ENCODE measurements at regions of chr5 and their contacts with region 1.

Region 1: DNA sequence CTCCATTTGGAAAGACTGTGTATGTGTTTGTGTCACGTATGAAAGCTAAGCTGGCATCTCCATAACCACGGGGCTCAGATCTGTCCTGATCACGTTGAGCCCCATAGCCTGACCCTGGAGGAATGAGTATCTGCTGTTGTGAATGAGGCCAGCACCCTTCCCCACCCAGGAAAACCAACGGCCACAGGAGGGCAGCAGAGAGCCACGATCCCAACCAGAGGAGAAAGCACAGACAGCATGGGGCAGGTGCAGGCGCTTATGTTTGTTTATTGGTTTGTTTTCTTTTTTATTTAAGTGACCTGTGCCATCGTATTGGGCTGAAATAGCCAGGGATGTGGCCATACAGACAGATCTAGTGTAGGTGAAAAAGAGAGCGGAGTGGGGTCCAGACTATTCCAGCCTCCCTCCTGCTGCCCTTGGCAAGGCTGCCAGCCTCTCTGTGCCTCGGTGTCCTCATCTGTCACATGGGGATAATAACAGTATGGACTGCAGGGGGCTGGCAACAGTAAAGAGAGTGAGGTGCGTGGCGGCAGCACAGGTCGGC is 12.0 kb downstream of the OR2V2 start:
- DNase-seq: peak; percentile 85
- CTCF ChIP-seq: peak; percentile 92

Region 2: DNA sequence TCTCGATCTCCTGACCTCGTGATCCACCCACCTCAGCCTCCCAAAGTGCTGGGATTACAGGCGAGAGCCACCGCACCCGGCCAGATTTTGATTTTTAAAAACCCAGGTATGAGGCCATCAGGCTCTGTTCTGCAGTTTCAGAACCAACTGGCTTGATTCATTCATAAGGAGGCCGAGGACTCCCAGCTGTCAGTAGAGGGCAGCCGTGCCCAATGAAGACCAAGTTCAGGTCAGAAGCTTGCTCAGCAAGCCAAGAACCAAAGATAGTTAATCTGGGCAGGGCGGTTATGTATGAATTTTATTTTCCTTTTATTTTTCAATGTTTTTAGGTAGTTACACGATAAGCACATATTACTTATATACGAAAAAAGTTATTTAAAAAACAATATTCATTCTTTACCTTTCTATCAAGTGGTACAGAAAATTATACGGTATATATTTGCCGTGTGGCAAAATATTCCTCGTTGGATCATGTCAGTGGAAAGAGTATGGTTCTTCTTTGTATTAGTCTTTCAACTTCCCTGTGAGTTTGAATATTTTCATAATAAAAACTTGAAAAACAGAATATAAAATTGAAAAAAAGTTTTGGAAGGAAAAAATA is 374.8 kb before region 1 on chr5:
- in situ Hi-C with region 1: loop called (anchors 10 kb)
- DNase-seq: peak; percentile 86
- CTCF ChIP-seq: peak; percentile 55

Region 3: GRCh38 chr5:180873615-180874520 is 285.5 kb before region 1 on chr5:
- in situ Hi-C with region 1: loop called (anchors 10 kb)
- DNase-seq: no peak
- CTCF ChIP-seq: no peak

Region 4: GRCh38 chr5:180970875-180971274 is 188.5 kb before region 1 on chr5:
- in situ Hi-C with region 1: no loop called
- DNase-seq: no peak
- CTCF ChIP-seq: no peak